Heart left ventricle (tissue), 16 donors: ENCODE measurements at regions of chr14 and their contacts with region 1.

Region 1: GRCh38 chr14:59126710-59127432 is 61.6 kb upstream of the DAAM1 start:
- DNase-seq: peak in 1 of 5 donors; percentile 18
- ATAC-seq: peak; percentile 70 to 92 (median 83)
- H3K4me3 ChIP-seq: no peak overlapping the region
- H3K27ac ChIP-seq: no peak overlapping the region
- H3K4me1 ChIP-seq: peaks cover 0 to 6% (median 0%) of the 10 kb centered on the region in 12 donors
- H3K27me3 ChIP-seq: no peaks in the 10 kb centered on the region
- CTCF ChIP-seq: peak; percentile 65 to 88 (median 82)
- POLR2A ChIP-seq: no peak

Region 2: GRCh38 chr14:58501214-58501816 is 625.6 kb before region 1 on chr14:
- intact Hi-C with region 1: loop called in 3 of 10 experiments (anchors 5 kb)
- DNase-seq: no peak
- ATAC-seq: peak in 3 of 4 donors; percentile 50 to 69 (median 58)
- H3K4me3 ChIP-seq: no peak overlapping the region
- H3K27ac ChIP-seq: no peak overlapping the region
- H3K4me1 ChIP-seq: no peaks in the 10 kb centered on the region
- H3K27me3 ChIP-seq: no peaks in the 10 kb centered on the region
- CTCF ChIP-seq: peak; percentile 64 to 87 (median 78)
- POLR2A ChIP-seq: no peak

Region 3: DNA sequence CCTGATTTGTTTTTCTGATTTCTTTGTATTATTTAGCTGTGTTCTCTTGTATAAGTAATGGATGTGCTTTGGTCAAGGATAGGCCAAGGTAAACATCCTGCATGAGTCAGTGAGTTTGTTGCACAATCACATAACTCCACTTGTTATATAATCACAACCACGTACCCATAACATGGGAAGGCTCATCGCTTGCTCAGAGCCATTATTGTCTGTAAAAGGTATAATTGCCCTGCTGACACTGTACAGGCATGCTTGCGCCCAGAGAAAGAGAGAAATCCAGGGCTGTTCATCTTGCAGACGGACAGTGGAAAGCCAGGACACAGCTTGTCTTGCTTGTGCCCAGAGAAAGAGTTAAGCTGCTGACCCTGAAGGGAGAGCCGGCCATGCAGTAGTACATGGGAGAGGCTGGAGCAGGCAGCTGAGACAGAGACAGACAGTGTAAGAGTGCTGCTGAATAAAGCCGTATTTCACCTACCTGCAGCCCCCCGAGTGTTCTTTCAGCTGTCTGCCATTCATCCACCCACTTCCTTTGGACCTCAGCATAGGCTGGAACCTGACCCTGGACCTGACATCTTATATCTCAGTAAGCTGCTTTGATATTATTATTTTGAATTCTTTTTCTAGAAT is 113.1 kb before region 1 on chr14:
- intact Hi-C with region 1: no loop called
- DNase-seq: no peak
- ATAC-seq: no peak
- H3K4me3 ChIP-seq: no peak overlapping the region
- H3K27ac ChIP-seq: no peak overlapping the region
- H3K4me1 ChIP-seq: no peaks in the 10 kb centered on the region
- H3K27me3 ChIP-seq: no peaks in the 10 kb centered on the region
- CTCF ChIP-seq: no peak
- POLR2A ChIP-seq: no peak

Region 4: DNA sequence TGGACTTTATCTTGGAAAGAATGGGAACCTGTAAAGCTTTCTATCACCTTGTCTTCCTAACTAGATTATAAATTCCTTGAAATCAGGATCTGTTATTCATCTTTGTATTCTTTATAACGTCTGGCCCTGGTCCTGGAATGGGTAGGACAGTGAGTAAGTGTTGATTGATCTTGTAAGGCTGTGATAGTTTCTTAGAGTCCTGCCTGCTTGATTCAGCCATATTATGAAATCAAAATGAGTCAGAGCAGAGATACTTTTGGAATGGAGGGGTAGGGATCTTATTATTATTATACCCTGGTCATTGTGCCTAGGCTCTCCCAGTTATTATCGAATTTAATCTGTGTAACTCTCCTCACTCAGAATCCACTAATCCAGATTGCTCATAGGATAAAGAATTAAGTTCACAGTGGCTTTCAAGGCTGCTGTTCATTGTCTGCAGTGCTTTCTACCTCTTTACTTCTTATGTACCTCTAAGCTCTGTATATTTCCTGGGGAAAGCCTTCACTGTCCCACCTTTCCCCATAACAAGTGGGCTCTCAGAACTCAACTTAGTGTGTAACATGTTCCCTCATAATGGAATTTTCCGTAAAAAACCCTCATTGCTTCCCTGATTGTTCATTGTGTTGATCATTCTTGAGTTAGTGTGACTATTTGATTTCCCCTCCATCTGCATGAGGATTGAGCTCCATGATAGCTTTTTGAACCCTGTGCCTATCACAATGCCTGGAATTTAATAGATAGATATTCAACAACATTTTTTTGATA is 154.9 kb after region 1 on chr14:
- intact Hi-C with region 1: loop called in 1 of 10 experiments (anchors 10 kb)
- DNase-seq: no peak
- ATAC-seq: peak in 3 of 4 donors; percentile 18 to 85 (median 82)
- H3K4me3 ChIP-seq: no peak overlapping the region
- H3K27ac ChIP-seq: peak overlapping the region in 1 of 12 donors; percentile 43
- H3K4me1 ChIP-seq: peaks cover 0 to 57% (median 17%) of the 10 kb centered on the region in 12 donors
- H3K27me3 ChIP-seq: no peaks in the 10 kb centered on the region
- CTCF ChIP-seq: no peak
- POLR2A ChIP-seq: no peak

Region 5: GRCh38 chr14:59438195-59438647 is 311.4 kb after region 1 on chr14:
- intact Hi-C with region 1: loop called in 2 of 10 experiments (anchors 1 to 2 kb)
- DNase-seq: no peak
- ATAC-seq: no peak
- H3K4me3 ChIP-seq: no peak overlapping the region
- H3K27ac ChIP-seq: peak overlapping the region in 9 of 12 donors; percentile 0 to 67 (median 39)
- H3K4me1 ChIP-seq: peaks cover 0 to 38% (median 6%) of the 10 kb centered on the region in 12 donors
- H3K27me3 ChIP-seq: no peaks in the 10 kb centered on the region
- CTCF ChIP-seq: no peak
- POLR2A ChIP-seq: no peak

Region 6: GRCh38 chr14:59576332-59577294 is 449.7 kb after region 1 on chr14 and contains the start of gene CCDC175:
- intact Hi-C with region 1: loop called in 2 of 10 experiments (anchors 10 kb)
- DNase-seq: peak; percentile 69 to 89 (median 71)
- ATAC-seq: peak; percentile 58 to 95 (median 88)
- H3K4me3 ChIP-seq: peak within 1 kb of the TSS in 11 of 12 donors; percentile 1 to 53 (median 38)
- H3K27ac ChIP-seq: no peak within 1 kb of the TSS
- H3K4me1 ChIP-seq: peaks cover 0 to 10% (median 0%) of the 10 kb centered on the region in 12 donors
- H3K27me3 ChIP-seq: peaks cover 0 to 17% (median 0%) of the 10 kb centered on the region in 9 donors
- CTCF ChIP-seq: peak; percentile 34 to 71 (median 58)
- POLR2A ChIP-seq: no peak
- total RNA-seq, gene CCDC175: not detected